IMR-90 (cell line): ENCODE measurements at regions of chr2 and their contacts with region 1.

Region 1: GRCh38 chr2:54074606-54075341 is 40.6 kb upstream of the ACYP2 start:
- DNase-seq: peak; percentile 22
- ATAC-seq: no peak
- H3K4me3 ChIP-seq: no peak overlapping the region
- H3K27ac ChIP-seq: no peak overlapping the region
- H3K4me1 ChIP-seq: no peaks in the 10 kb centered on the region
- H3K27me3 ChIP-seq: no peaks in the 10 kb centered on the region
- CTCF ChIP-seq: no peak
- POLR2A ChIP-seq: no peak
- RAD21 ChIP-seq: no peak

Region 2: GRCh38 chr2:53987336-53987921 is 87.3 kb before region 1 on chr2:
- CTCF ChIA-PET with region 1: no interaction called
- POLR2A ChIA-PET with region 1: no interaction called
- dilution Hi-C with region 1: no loop called
- in situ Hi-C with region 1: no loop called
- intact Hi-C with region 1: loop called (anchors 5 kb)
- DNase-seq: peak; percentile 82
- ATAC-seq: peak; percentile 78
- H3K4me3 ChIP-seq: no peak overlapping the region
- H3K27ac ChIP-seq: no peak overlapping the region
- H3K4me1 ChIP-seq: 0 out of 2 replicates have a peak, but pooled peaks cover 2% of the 10 kb centered on the region
- H3K27me3 ChIP-seq: no peaks in the 10 kb centered on the region
- CTCF ChIP-seq: no peak
- POLR2A ChIP-seq: no peak
- RAD21 ChIP-seq: no peak

Region 3: GRCh38 chr2:54115284-54116137 is 40.7 kb after region 1 on chr2 and contains the start of gene ACYP2:
- CTCF ChIA-PET with region 1: no interaction called
- POLR2A ChIA-PET with region 1: no interaction called
- dilution Hi-C with region 1: no loop called
- in situ Hi-C with region 1: no loop called
- intact Hi-C with region 1: no loop called
- DNase-seq: peak; percentile 96
- ATAC-seq: peak; percentile 97
- H3K4me3 ChIP-seq: peak within 1 kb of the TSS; percentile 77
- H3K27ac ChIP-seq: peak within 1 kb of the TSS; percentile 99
- H3K4me1 ChIP-seq: no peaks in the 10 kb centered on the region
- H3K27me3 ChIP-seq: no peaks in the 10 kb centered on the region
- CTCF ChIP-seq: peak; percentile 47
- POLR2A ChIP-seq: peak; percentile 93
- RAD21 ChIP-seq: peak; percentile 51
- total RNA-seq, gene ACYP2: 3.9 and 5.8 TPM in 2 replicates